ENCODE measurements at regions of chr12 and their contacts with region 1.

Region 1: GRCh38 chr12:49662998-49663843 is 39.9 kb downstream of the PRPF40B start:
- DNase-seq: peak; percentile 67 to 88 (median 77)
- H3K4me3 ChIP-seq: peak overlapping the region; percentile 46
- H3K4me3 Mint-ChIP-seq: peak overlapping the region; percentile 18 to 92 (median 81)
- H3K27ac ChIP-seq: peak overlapping the region; percentile 62
- H3K27ac Mint-ChIP-seq: peak overlapping the region; percentile 96 to 100 (median 98)
- H3K4me1 ChIP-seq: peaks cover 62% of the 10 kb centered on the region
- H3K4me1 Mint-ChIP-seq: peaks cover 60 to 83% (median 73%) of the 10 kb centered on the region in 3 donors
- H3K27me3 ChIP-seq: no peaks in the 10 kb centered on the region
- H3K27me3 Mint-ChIP-seq: no peaks in the 10 kb centered on the region

Region 2: DNA sequence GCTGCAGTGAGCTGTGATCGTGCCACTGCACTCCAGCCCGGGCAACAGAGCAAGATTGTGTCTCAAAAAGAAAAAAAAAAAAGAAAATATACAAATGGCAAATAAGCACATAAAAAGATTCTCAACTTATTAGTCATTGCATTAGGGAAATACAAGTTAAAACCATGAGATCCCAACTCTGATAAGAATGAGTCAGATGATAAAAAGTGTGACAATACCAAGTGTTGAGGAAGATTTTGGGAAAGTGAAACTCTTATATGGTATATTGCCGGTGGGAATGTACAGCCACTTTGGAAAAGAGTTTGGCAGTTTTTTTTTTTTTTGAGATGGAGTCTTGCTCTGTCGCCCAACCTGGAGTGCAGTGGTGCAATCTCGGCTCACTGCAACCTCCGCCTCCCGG is 47.5 kb before region 1 on chr12:
- CTCF ChIA-PET with region 1: no interaction called
- POLR2A ChIA-PET with region 1: no interaction called
- DNase-seq: no peak
- H3K4me3 ChIP-seq: no peak overlapping the region
- H3K4me3 Mint-ChIP-seq: no peak overlapping the region
- H3K27ac ChIP-seq: no peak overlapping the region
- H3K27ac Mint-ChIP-seq: no peak overlapping the region
- H3K4me1 ChIP-seq: no peaks in the 10 kb centered on the region
- H3K4me1 Mint-ChIP-seq: peaks cover 1 to 4% (median 4%) of the 10 kb centered on the region in 3 donors
- H3K27me3 ChIP-seq: no peaks in the 10 kb centered on the region
- H3K27me3 Mint-ChIP-seq: peaks cover 19 to 22% of the 10 kb centered on the region in 2 donors

Region 3: DNA sequence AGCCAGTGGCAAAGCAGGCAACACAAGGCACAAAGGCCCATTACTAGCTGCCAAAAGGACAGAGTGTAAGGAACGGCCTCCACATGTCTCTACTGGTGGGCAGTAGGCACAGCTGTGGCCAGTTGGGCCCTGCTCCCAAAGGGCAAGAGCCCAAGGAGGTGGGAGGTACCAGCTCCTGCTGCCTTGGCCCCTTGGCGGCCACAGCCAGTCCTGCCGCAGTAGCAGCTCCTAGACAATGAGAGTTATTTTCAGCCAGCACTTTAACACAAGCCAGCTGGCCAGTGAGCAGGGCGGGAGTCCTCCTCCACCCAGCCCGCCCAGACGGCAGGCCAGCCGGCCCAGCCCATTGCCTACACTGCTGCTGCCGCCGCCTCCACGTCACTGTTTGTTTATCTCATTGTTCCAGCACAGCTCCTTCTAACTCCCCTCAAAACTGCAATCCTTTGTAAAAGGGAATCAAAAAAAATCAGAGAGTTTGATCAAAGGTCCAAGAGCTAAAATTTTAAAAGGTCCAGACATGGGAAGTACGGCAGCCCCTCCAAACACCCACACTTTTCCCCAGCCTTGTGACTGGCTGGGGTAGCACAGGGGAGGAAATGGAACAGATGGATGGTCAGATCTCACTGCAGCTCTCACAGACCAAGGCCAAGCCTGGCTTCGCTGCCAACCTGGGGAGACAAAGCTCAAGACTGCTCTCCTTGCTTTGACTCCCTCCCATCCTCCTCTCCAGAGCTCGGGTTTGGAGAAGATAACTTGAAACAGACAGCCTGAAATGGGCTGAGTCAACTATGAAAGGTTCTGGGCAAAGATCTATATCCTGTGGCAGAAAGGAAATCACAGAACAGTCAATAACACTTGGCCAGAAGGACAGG is 10.5 kb after region 1 on chr12:
- CTCF ChIA-PET with region 1: interaction called, 17 read pairs
- POLR2A ChIA-PET with region 1: interaction called, 7 read pairs
- DNase-seq: no peak
- H3K4me3 ChIP-seq: no peak overlapping the region
- H3K4me3 Mint-ChIP-seq: peak overlapping the region in 4 of 7 donors; percentile 18 to 54 (median 44)
- H3K27ac ChIP-seq: peak overlapping the region; percentile 64
- H3K27ac Mint-ChIP-seq: peak overlapping the region; percentile 90 to 99 (median 98)
- H3K4me1 ChIP-seq: peaks cover 83% of the 10 kb centered on the region
- H3K4me1 Mint-ChIP-seq: peaks cover 72 to 85% (median 84%) of the 10 kb centered on the region in 3 donors
- H3K27me3 ChIP-seq: no peaks in the 10 kb centered on the region
- H3K27me3 Mint-ChIP-seq: no peaks in the 10 kb centered on the region

Region 4: DNA sequence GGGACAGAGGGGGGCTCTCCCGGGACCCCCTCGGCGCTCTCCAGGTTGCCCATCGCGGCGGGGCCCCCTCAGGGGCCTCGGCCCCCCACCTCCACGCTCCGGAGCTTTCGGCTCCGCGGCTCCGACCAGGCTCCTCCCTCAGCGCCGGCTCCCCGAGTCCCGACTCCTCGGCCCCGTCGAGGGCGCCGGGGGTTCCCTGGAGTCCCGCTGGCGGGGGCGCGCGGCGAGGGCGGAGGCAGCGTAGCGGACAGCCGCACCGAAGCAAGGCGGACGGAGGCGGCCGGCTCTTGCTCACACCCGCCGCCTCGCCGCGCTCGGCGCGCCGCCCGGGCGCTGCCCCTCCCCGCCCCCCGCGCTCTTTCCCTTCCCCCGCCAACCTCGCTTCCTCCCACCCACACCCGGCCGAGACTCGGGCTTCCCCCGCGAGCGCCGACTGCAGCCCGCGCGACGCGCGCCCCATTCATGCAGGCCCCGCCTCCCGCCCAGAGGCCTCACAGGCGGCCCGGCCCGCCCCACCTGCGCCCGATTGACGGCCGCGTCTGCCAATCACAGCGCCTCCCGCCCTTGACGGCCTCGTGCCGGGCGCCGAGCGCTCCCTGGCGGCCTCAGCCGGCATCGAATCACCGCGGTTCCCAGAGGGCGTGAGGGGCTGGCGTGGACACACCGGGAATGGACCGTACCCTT is 44.0 kb after region 1 on chr12 and contains the start of gene FMNL3:
- CTCF ChIA-PET with region 1: interaction called, 120 read pairs
- POLR2A ChIA-PET with region 1: interaction called, 7 read pairs
- DNase-seq: peak; percentile 97 to 99 (median 99)
- H3K4me3 ChIP-seq: peak within 1 kb of the TSS; percentile 72
- H3K4me3 Mint-ChIP-seq: peak within 1 kb of the TSS; percentile 87 to 96 (median 91)
- H3K27ac ChIP-seq: peak within 1 kb of the TSS; percentile 76
- H3K27ac Mint-ChIP-seq: peak within 1 kb of the TSS; percentile 33 to 95 (median 90)
- H3K4me1 ChIP-seq: peaks cover 39% of the 10 kb centered on the region
- H3K4me1 Mint-ChIP-seq: peaks cover 39 to 45% (median 44%) of the 10 kb centered on the region in 3 donors
- H3K27me3 ChIP-seq: no peaks in the 10 kb centered on the region
- H3K27me3 Mint-ChIP-seq: peaks cover 5 to 6% of the 10 kb centered on the region in 2 donors
- total RNA-seq, gene FMNL3: 35.8 to 36.7 TPM

Measured in CD8-positive, alpha-beta memory T cell (primary cell).